Heart left ventricle (tissue), 16 donors: ENCODE measurements at regions of chr16 and their contacts with region 1.

Region 1: DNA sequence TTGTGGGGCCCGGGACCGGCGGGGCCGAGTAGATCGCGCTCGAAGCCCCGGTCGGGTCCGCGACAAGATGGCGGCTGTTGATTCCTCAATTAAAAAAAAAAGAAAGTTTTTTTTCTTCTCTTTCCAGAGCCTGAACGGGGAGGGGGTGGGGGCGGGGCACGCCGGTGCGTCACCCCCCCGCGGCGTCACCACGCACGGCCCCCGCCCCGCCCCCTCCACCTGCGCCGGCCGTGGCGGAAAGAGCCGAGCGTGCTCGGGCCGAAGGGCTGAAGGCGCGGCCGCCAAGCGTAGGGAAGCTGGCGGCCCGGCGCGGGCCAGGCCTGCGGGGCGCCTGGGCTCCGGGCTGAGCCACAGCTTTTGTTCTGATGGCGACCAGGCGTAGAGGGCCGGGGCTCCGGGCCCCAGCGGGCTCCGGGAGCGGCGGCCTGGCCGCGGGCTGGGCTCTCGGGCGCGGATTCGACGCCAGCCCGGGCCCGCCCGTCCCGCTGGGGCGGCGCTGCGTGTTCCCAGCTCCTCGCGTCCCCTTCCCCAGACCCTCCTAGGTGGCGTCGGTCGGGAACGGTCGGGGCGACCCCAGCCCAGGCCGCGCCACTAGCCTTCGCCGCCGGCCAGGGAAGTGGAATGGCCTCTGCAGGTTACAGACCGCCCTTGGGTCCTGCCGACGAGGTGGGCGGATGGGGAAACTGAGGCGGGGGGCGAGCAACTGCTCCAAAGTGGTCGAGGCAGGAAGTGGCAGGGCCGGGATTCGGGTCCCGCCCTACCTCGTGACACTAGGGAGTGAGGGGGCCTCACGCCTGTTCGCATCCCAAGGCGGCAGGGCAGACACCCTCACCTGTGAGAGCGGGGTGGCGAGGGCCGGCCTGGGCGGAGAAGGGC is at the start of gene CREBBP:
- DNase-seq: peak; percentile 82 to 94 (median 91)
- ATAC-seq: peak; percentile 79 to 93 (median 91)
- H3K4me3 ChIP-seq: peak within 1 kb of the TSS; percentile 60 to 96 (median 86)
- H3K27ac ChIP-seq: peak within 1 kb of the TSS; percentile 65 to 93 (median 84)
- H3K4me1 ChIP-seq: peaks cover 2 to 39% (median 30%) of the 10 kb centered on the region in 12 donors
- H3K27me3 ChIP-seq: no peaks in the 10 kb centered on the region
- CTCF ChIP-seq: no peak
- POLR2A ChIP-seq: peak in 1 of 2 donors; percentile 74
- total RNA-seq, gene CREBBP: 20.0 to 77.6 (median 45.9) TPM

Region 2: DNA sequence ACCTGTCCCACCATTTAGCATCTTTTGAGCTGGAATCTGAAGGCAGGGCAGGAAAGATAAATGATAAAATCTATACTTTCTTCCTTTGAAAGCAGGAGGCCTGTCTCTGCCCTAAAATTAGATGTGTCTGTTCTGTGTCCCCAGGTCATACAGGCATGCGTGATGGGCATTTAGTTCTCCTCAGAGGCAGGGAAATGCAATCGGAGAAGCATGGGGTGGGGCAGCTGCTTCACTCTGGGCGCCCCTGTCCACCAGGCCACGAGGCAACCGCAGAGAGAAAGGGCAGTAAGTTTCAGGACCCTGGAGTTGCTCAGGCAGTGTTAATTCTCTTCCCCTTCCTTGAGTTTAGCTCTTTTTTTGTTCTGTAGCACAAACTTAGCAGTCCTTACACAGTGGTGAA is 354.9 kb before region 1 on chr16:
- intact Hi-C with region 1: loop called in 5 of 10 experiments (anchors 5 to 10 kb)
- DNase-seq: no peak
- ATAC-seq: no peak
- H3K4me3 ChIP-seq: no peak overlapping the region
- H3K27ac ChIP-seq: no peak overlapping the region
- H3K4me1 ChIP-seq: peaks cover 0 to 4% (median 0%) of the 10 kb centered on the region in 12 donors
- H3K27me3 ChIP-seq: no peaks in the 10 kb centered on the region
- CTCF ChIP-seq: no peak
- POLR2A ChIP-seq: no peak

Region 3: DNA sequence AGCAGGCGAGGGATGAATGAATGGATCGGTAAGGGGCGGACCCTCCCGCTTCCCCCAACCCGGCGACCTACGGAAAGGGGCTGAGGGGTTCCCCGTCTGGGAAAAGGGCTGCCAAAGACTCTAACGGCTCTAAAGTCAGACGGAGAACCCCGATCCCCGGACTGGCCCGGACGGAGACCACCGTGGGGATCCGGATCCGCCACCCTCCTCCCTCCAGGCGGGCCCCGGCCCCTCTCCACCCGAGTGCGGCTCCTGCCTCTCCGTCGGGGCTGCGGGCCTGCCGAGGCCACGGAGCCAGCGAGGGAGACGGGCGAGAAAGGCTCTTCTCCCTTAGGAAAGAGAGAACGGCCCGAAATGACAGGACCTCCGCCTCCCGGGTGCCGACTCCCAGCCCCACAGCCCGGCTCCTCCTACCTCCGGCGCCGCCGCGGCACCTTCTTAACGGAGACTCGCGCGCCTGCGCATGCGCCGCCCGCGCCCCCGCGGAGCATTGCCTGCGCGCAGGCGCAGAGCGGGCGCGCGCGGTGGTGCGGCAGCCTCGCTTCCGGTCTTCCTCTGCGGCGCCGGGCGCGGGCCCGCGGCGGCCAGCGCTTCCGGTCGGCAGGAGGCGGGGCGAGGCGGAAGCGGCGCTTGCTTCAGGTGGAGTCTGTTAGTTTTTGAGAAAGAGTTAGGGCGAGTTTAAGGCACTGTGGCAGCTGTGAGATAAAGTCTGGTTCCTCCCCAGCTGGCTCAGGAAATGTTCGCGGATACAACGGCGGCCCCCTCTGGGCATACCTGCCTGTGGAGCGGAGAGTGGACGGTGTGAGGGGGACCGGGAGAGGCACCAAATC is 269.5 kb before region 1 on chr16 and contains the start of gene SLX4:
- intact Hi-C with region 1: loop called in 2 of 10 experiments (anchors 5 to 10 kb)
- DNase-seq: peak; percentile 91 to 96 (median 92)
- ATAC-seq: peak; percentile 89 to 98 (median 96)
- H3K4me3 ChIP-seq: peak within 1 kb of the TSS; percentile 60 to 99 (median 87)
- H3K27ac ChIP-seq: peak within 1 kb of the TSS; percentile 64 to 94 (median 86)
- H3K4me1 ChIP-seq: peaks cover 0 to 33% (median 19%) of the 10 kb centered on the region in 12 donors
- H3K27me3 ChIP-seq: no peaks in the 10 kb centered on the region
- CTCF ChIP-seq: peak in 2 of 12 donors; percentile 4 to 24
- POLR2A ChIP-seq: peak; percentile 55 to 92
- total RNA-seq, gene SLX4: 2.0 to 4.7 (median 3.2) TPM

Region 4: GRCh38 chr16:3762107-3762750 is 118.6 kb before region 1 on chr16:
- intact Hi-C with region 1: no loop called
- DNase-seq: no peak
- ATAC-seq: no peak
- H3K4me3 ChIP-seq: no peak overlapping the region
- H3K27ac ChIP-seq: no peak overlapping the region
- H3K4me1 ChIP-seq: no peaks in the 10 kb centered on the region
- H3K27me3 ChIP-seq: no peaks in the 10 kb centered on the region
- CTCF ChIP-seq: no peak
- POLR2A ChIP-seq: no peak

Region 5: DNA sequence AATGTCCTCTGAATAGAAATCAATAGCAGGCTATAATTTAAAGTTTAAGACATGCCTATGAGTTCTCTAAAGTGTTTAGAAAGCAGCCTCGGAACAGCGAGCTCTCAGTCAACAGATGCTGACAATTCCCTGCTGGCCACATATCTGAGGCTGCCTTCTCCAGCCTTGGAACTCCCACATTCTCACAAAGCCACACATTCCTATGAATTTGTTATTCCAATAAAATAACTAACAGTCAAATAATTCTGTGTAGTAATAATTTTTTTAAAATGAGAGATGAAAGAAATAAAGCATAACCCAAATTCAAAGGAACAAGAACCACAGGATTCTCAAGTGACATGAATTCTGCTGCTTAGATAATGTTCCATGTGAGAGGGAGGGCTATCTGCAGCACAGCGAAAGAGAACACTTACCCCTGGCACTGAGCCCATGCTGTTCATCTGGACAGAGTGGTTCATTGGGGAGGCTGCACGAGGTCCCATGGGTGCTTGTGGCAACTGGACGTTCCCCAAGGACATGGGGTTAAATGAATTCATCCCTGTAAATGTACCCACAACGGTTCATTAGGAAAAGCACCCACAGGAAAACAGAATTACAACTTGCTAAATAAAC is 106.6 kb before region 1 on chr16:
- intact Hi-C with region 1: loop called in 1 of 10 experiments (anchors 10 kb)
- DNase-seq: peak; percentile 67 to 88 (median 72)
- ATAC-seq: peak; percentile 85 to 88 (median 87)
- H3K4me3 ChIP-seq: no peak overlapping the region
- H3K27ac ChIP-seq: peak overlapping the region in 11 of 12 donors; percentile 0 to 67 (median 37)
- H3K4me1 ChIP-seq: peaks cover 5 to 45% (median 26%) of the 10 kb centered on the region in 12 donors
- H3K27me3 ChIP-seq: no peaks in the 10 kb centered on the region
- CTCF ChIP-seq: no peak
- POLR2A ChIP-seq: no peak

Region 6: GRCh38 chr16:3793161-3793576 is 87.7 kb before region 1 on chr16:
- intact Hi-C with region 1: loop called in 3 of 10 experiments (anchors 5 to 10 kb)
- DNase-seq: peak in 4 of 5 donors; percentile 57 to 67 (median 60)
- ATAC-seq: peak; percentile 60 to 90 (median 88)
- H3K4me3 ChIP-seq: peak overlapping the region in 3 of 12 donors; percentile 3 to 38 (median 8)
- H3K27ac ChIP-seq: peak overlapping the region; percentile 19 to 72 (median 52)
- H3K4me1 ChIP-seq: peaks cover 0 to 60% (median 44%) of the 10 kb centered on the region in 12 donors
- H3K27me3 ChIP-seq: no peaks in the 10 kb centered on the region
- CTCF ChIP-seq: peak in 9 of 12 donors; percentile 6 to 51 (median 28)
- POLR2A ChIP-seq: peak in 1 of 2 donors; percentile 21

Region 7: GRCh38 chr16:3829631-3830536 is 51.0 kb before region 1 on chr16:
- intact Hi-C with region 1: loop called in 1 of 10 experiments (anchors 5 kb)
- DNase-seq: no peak
- ATAC-seq: no peak
- H3K4me3 ChIP-seq: no peak overlapping the region
- H3K27ac ChIP-seq: no peak overlapping the region
- H3K4me1 ChIP-seq: peaks cover 0 to 56% (median 28%) of the 10 kb centered on the region in 12 donors
- H3K27me3 ChIP-seq: no peaks in the 10 kb centered on the region
- CTCF ChIP-seq: no peak
- POLR2A ChIP-seq: no peak

Region 8: DNA sequence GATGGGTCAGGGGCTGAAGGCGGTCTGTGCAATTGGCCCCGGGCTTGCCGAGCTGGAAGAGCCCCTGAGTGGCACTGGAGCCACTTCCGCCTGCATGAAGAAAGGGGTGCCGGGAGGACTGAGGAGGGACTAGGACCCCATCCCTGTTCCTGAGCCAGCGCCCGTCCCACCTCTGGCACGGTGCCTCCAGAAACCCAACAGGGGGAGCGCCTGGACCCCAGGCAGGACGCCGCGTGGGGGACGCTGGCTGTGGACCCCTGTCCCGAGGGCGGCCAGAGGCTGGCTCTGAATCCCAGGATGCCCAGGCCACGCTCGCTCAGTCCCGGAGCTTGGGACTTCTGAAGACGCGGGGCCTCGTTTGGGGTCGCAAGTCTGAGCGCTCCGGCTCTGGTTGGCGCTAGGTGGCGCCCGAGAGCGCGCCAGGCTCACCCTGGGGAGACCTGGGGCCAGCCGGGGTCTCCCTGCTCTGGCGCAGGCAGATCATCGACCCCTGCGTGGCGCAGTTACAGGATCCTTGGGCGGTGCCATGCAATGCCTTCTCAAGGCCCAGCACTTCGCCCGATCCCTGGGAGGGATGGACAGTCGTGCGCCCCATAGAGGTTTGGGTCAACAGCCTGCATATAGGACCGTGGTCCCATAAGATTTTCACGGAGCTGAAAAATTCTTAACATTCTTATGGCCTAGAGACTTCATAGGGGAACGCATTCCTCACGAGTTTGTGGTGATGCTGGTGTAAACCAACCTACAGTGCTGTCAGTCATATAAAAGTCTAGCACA is 58.2 kb after region 1 on chr16:
- intact Hi-C with region 1: no loop called
- DNase-seq: peak in 4 of 5 donors; percentile 47 to 88 (median 59)
- ATAC-seq: peak; percentile 57 to 89 (median 84)
- H3K4me3 ChIP-seq: peak overlapping the region; percentile 19 to 66 (median 53)
- H3K27ac ChIP-seq: peak overlapping the region in 2 of 12 donors; percentile 15 to 39
- H3K4me1 ChIP-seq: peaks cover 0 to 12% (median 6%) of the 10 kb centered on the region in 12 donors
- H3K27me3 ChIP-seq: no peaks in the 10 kb centered on the region
- CTCF ChIP-seq: peak; percentile 92 to 100 (median 97)
- POLR2A ChIP-seq: no peak

Region 9: GRCh38 chr16:3961449-3961849 is 80.6 kb after region 1 on chr16:
- intact Hi-C with region 1: loop called in 1 of 10 experiments (anchors 5 kb)
- DNase-seq: no peak
- ATAC-seq: no peak
- H3K4me3 ChIP-seq: peak overlapping the region in 6 of 12 donors; percentile 38 to 59 (median 56)
- H3K27ac ChIP-seq: peak overlapping the region in 10 of 12 donors; percentile 53 to 84 (median 70)
- H3K4me1 ChIP-seq: peaks cover 0 to 51% (median 38%) of the 10 kb centered on the region in 12 donors
- H3K27me3 ChIP-seq: no peaks in the 10 kb centered on the region
- CTCF ChIP-seq: no peak
- POLR2A ChIP-seq: no peak